ENCODE measurements at regions of chr6 and their contacts with region 1.

Region 1: DNA sequence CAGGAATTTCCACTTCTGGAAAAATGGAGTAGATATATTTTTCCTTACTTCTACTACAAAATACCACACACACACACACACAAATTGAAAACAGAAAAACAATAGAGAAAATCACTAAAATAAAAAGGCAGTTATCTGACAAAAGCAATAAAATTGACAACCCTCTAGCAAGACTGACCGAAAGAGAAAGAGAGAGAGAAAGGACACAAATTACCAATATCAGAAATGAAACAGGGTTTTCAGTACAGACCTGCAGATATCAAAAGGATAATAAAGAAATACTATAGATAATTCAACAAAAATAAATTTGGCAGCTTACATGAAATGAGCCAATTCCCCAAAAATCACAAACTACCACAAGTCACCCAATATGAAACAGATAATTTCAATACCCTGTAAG is 104.7 kb downstream of the OPRM1 start:
- DNase-seq: no peak
- ATAC-seq: no peak
- H3K4me3 ChIP-seq: no peak overlapping the region
- H3K27ac ChIP-seq: no peak overlapping the region
- H3K4me1 ChIP-seq: no peaks in the 10 kb centered on the region
- H3K27me3 ChIP-seq: no peaks in the 10 kb centered on the region
- CTCF ChIP-seq: no peak
- POLR2A ChIP-seq: no peak

Region 2: GRCh38 chr6:153625089-153625488 is 518.7 kb before region 1 on chr6:
- in situ Hi-C with region 1: no loop called
- intact Hi-C with region 1: no loop called
- DNase-seq: no peak
- ATAC-seq: no peak
- H3K4me3 ChIP-seq: no peak overlapping the region
- H3K27ac ChIP-seq: no peak overlapping the region
- H3K4me1 ChIP-seq: no peaks in the 10 kb centered on the region
- H3K27me3 ChIP-seq: no peaks in the 10 kb centered on the region
- CTCF ChIP-seq: no peak
- POLR2A ChIP-seq: no peak

Region 3: GRCh38 chr6:154056536-154056935 is 87.2 kb before region 1 on chr6:
- in situ Hi-C with region 1: no loop called
- intact Hi-C with region 1: no loop called
- DNase-seq: no peak
- ATAC-seq: no peak
- H3K4me3 ChIP-seq: no peak overlapping the region
- H3K27ac ChIP-seq: no peak overlapping the region
- H3K4me1 ChIP-seq: no peaks in the 10 kb centered on the region
- H3K27me3 ChIP-seq: no peaks in the 10 kb centered on the region
- CTCF ChIP-seq: no peak
- POLR2A ChIP-seq: no peak

Region 4: GRCh38 chr6:154164397-154165165 is 20.8 kb after region 1 on chr6:
- in situ Hi-C with region 1: no loop called
- intact Hi-C with region 1: loop called (anchors 1 kb)
- DNase-seq: no peak
- ATAC-seq: no peak
- H3K4me3 ChIP-seq: no peak overlapping the region
- H3K27ac ChIP-seq: no peak overlapping the region
- H3K4me1 ChIP-seq: no peaks in the 10 kb centered on the region
- H3K27me3 ChIP-seq: no peaks in the 10 kb centered on the region
- CTCF ChIP-seq: no peak
- POLR2A ChIP-seq: no peak

Region 5: GRCh38 chr6:154359161-154359574 is 215.4 kb after region 1 on chr6:
- in situ Hi-C with region 1: no loop called
- intact Hi-C with region 1: no loop called
- DNase-seq: no peak
- ATAC-seq: no peak
- H3K4me3 ChIP-seq: no peak overlapping the region
- H3K27ac ChIP-seq: no peak overlapping the region
- H3K4me1 ChIP-seq: no peaks in the 10 kb centered on the region
- H3K27me3 ChIP-seq: no peaks in the 10 kb centered on the region
- CTCF ChIP-seq: no peak
- POLR2A ChIP-seq: no peak

Measured in gastrocnemius medialis (tissue), 4 donors.